Activated B cell treated with CpG ODN at 0.5 μM for 24 hours (primary cell): ENCODE measurements at regions of chr3 and their contacts with region 1.

Region 1: DNA sequence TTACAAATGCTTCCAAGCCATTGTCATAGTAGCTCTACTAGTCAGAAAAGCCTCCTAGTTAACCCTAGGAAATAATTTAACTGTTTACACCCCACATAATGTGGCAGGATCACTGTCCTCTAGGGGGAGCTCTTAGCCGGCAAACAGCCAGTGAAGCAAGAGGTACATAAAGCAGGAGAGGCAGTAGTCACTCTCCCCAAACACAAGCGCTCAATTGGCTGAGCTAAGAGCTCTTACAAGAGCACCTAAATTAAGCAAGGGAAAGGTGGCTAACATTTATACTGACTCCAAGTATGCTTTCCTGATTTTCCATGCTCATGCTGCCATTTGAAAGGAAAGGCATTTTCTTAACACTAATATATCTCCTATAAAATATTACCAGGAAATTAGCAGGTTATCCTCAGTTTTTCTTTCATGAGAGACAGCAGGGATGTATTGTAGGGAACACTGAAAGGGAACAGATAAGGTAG is 37.6 kb downstream of the NCEH1 start:
- DNase-seq: no peak
- ATAC-seq: no peak
- H3K4me3 Mint-ChIP-seq: no peak overlapping the region
- H3K27ac Mint-ChIP-seq: no peak overlapping the region
- H3K4me1 Mint-ChIP-seq: peaks cover 2% of the 10 kb centered on the region
- H3K27me3 Mint-ChIP-seq: no peaks in the 10 kb centered on the region
- CTCF ChIP-seq: no peak

Region 2: GRCh38 chr3:172710664-172711453 is 37.6 kb after region 1 on chr3 and contains the start of gene NCEH1:
- CTCF ChIA-PET with region 1: interaction called, 3 read pairs
- POLR2A ChIA-PET with region 1: no interaction called
- intact Hi-C with region 1: loop called (anchors 1 kb)
- DNase-seq: peak; percentile 70
- ATAC-seq: peak; percentile 100
- H3K4me3 Mint-ChIP-seq: peak within 1 kb of the TSS; percentile 97
- H3K27ac Mint-ChIP-seq: peak within 1 kb of the TSS; percentile 83
- H3K4me1 Mint-ChIP-seq: peaks cover 22% of the 10 kb centered on the region
- H3K27me3 Mint-ChIP-seq: no peaks in the 10 kb centered on the region
- CTCF ChIP-seq: no peak
- total RNA-seq, gene NCEH1: 4.5 and 4.9 TPM in 2 replicates